ENCODE measurements at regions of chr7 and their contacts with region 1.

Region 1: DNA sequence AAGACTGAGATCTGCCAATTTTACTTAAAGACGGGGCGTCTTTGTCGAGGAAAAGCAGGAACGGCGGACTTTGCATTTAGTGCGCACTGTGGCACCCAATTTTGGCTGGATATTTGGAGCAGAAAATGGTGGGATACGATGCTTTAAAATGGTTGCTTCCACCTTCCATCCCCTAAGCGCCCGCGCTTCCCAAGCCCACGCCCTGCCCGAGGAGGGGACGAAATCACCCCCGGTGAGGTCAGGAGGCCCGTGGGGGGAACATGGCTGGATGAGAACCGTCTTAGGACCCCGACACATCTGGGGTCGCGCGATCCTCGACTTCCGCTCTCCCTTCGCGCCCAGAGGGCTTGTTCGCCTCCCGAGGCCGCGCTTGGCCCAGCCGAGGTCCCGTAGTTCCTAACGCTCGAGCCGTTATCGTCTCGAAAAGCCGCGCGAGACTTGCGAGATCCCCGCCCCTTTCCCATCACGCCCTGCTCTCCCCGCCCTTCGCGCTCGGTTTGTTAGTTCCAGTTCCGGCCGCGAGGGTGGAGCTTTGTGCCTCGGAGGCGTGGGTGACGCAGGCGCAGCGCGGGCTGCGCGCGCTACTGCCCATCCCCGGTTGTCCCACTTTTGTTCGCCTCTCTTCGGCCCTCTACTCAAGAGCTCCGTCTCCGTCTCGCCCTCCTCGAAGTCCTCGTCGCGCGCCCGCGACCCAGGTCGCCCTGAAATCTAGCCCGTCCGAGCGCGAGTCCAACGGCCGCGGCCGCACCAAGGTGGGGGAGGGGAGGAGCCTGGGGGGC is at the start of gene SRRT:
- DNase-seq: peak; percentile 97 to 99 (median 98)
- ATAC-seq: peak; percentile 97
- H3K4me3 ChIP-seq: peak within 1 kb of the TSS; percentile 75 to 94
- H3K4me3 Mint-ChIP-seq: peak within 1 kb of the TSS; percentile 98
- H3K27ac ChIP-seq: peak within 1 kb of the TSS; percentile 93 to 96
- H3K27ac Mint-ChIP-seq: peak within 1 kb of the TSS; percentile 99
- H3K4me1 ChIP-seq: peaks cover 41% of the 10 kb centered on the region
- H3K4me1 Mint-ChIP-seq: peaks cover 43% of the 10 kb centered on the region
- H3K27me3 ChIP-seq: no peaks in the 10 kb centered on the region
- H3K27me3 Mint-ChIP-seq: no peaks in the 10 kb centered on the region
- CTCF ChIP-seq: no peak
- total RNA-seq, gene SRRT: 491 to 496 TPM

Region 2: GRCh38 chr7:100837099-100837836 is 37.5 kb before region 1 on chr7:
- CTCF ChIA-PET with region 1: no interaction called
- POLR2A ChIA-PET with region 1: no interaction called
- intact Hi-C with region 1: loop called in 1 of 2 experiments (anchors 1 kb)
- DNase-seq: peak; percentile 54 to 88 (median 78)
- ATAC-seq: peak; percentile 95
- H3K4me3 ChIP-seq: peak overlapping the region; percentile 50 to 64
- H3K4me3 Mint-ChIP-seq: peak overlapping the region; percentile 82
- H3K27ac ChIP-seq: peak overlapping the region; percentile 22 to 30
- H3K27ac Mint-ChIP-seq: peak overlapping the region; percentile 74
- H3K4me1 ChIP-seq: peaks cover 4% of the 10 kb centered on the region
- H3K4me1 Mint-ChIP-seq: peaks cover 8% of the 10 kb centered on the region
- H3K27me3 ChIP-seq: no peaks in the 10 kb centered on the region
- H3K27me3 Mint-ChIP-seq: no peaks in the 10 kb centered on the region
- CTCF ChIP-seq: no peak

Region 3: DNA sequence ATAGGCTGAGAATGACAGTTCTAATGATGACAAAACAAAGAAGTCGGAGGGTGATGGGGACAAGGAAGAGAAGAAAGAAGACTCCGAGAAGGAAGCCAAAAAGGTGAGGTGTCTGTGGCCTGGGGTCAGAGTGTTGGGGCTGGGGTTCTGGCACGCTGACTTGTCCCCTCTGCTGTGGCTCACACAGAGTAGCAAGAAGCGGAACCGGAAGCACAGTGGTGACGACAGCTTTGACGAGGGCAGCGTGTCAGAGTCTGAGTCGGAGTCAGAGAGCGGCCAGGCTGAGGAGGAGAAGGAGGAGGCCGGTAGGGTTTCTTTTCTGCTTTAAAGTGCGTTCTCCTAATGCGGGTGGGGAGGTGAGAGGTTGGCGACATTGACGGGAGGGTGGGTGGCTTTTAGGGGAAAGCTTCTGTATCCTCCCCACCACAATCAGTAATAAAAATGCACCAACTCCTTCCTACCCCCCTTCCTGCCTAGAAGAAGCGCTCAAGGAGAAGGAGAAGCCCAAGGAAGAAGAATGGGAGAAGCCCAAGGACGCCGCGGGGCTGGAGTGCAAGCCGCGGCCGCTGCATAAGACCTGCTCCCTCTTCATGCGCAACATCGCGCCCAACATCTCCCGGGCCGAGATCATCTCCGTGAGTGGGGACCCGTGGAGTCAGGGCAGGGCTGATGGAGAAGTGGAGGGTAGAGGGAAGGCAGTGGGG is 10.1 kb after region 1 on chr7:
- CTCF ChIA-PET with region 1: interaction called, 27 read pairs
- POLR2A ChIA-PET with region 1: interaction called, 106 read pairs
- intact Hi-C with region 1: loop called (anchors 1 kb)
- DNase-seq: peak in 5 of 9 experiments; percentile 26 to 91 (median 82)
- ATAC-seq: peak; percentile 37
- H3K4me3 ChIP-seq: peak overlapping the region in 1 of 2 experiments; percentile 18
- H3K4me3 Mint-ChIP-seq: peak overlapping the region; percentile 67
- H3K27ac ChIP-seq: peak overlapping the region in 1 of 2 experiments; percentile 87
- H3K27ac Mint-ChIP-seq: peak overlapping the region; percentile 87
- H3K4me1 ChIP-seq: peaks cover 27% of the 10 kb centered on the region
- H3K4me1 Mint-ChIP-seq: peaks cover 46% of the 10 kb centered on the region
- H3K27me3 ChIP-seq: no peaks in the 10 kb centered on the region
- H3K27me3 Mint-ChIP-seq: no peaks in the 10 kb centered on the region
- CTCF ChIP-seq: no peak

Region 4: DNA sequence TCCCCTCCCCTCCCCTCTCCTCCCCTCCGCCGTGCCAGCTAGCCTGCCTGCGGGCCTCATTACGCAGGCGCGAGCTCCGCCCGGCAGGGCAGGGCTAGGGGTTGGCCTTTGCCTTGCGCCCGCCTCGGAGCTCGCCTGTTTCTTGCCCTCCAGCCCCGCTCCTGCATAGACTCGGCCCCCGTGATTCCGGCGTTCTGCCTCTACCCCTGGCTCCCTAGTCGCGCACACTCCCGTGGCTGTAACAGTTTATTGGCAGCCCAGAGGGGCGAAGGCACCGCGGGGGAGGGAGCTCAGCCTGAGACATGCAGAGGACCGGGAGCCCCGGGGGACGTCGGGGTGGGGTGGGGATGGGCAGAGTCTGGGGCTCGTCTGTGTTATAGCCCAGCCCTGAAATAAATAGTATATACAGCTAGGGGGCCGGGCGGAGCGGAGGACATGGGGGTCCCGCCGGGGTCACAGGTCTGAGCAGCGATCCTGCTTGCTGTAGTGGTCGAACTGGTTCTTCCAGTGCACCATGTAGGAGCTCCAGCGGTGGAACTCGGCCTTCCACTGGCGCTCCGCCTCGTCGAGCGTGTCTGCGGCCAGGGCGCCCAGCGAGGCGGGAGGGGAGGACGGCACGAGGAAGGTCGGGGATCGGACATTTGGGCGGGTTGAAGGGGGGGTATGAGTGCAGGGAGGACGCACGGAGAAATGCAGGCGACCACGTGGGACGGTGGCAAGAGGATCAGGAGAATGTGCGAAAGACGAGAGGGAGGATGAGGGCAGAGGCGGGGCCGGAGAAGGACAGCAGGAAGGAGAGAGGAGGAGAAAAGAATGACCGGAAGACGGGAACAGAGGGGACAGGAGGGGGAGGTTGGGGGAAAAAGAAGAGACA is 15.2 kb after region 1 on chr7:
- CTCF ChIA-PET with region 1: interaction called, 27 read pairs
- POLR2A ChIA-PET with region 1: interaction called, 106 read pairs
- intact Hi-C with region 1: loop called (anchors 1 kb)
- DNase-seq: peak; percentile 79 to 97 (median 91)
- ATAC-seq: peak; percentile 82
- H3K4me3 ChIP-seq: peak overlapping the region; percentile 65 to 90
- H3K4me3 Mint-ChIP-seq: peak overlapping the region; percentile 87
- H3K27ac ChIP-seq: peak overlapping the region; percentile 22 to 44
- H3K27ac Mint-ChIP-seq: peak overlapping the region; percentile 72
- H3K4me1 ChIP-seq: peaks cover 40% of the 10 kb centered on the region
- H3K4me1 Mint-ChIP-seq: peaks cover 42% of the 10 kb centered on the region
- H3K27me3 ChIP-seq: peaks cover 0 to 20% of the 10 kb centered on the region in 2 experiments
- H3K27me3 Mint-ChIP-seq: peaks cover 13% of the 10 kb centered on the region
- CTCF ChIP-seq: no peak

Region 5: GRCh38 chr7:101085162-101085987 is 210.6 kb after region 1 on chr7 and contains the start of gene TRIM56:
- CTCF ChIA-PET with region 1: interaction called, 3 read pairs
- POLR2A ChIA-PET with region 1: interaction called, 5 read pairs
- intact Hi-C with region 1: loop called in 1 of 2 experiments (anchors 1 kb)
- DNase-seq: peak; percentile 43 to 89 (median 76)
- ATAC-seq: peak; percentile 91
- H3K4me3 ChIP-seq: peak within 1 kb of the TSS; percentile 81 to 95
- H3K4me3 Mint-ChIP-seq: peak within 1 kb of the TSS; percentile 98
- H3K27ac ChIP-seq: peak within 1 kb of the TSS; percentile 91 to 94
- H3K27ac Mint-ChIP-seq: peak within 1 kb of the TSS; percentile 98
- H3K4me1 ChIP-seq: peaks cover 30% of the 10 kb centered on the region
- H3K4me1 Mint-ChIP-seq: peaks cover 27% of the 10 kb centered on the region
- H3K27me3 ChIP-seq: no peaks in the 10 kb centered on the region
- H3K27me3 Mint-ChIP-seq: no peaks in the 10 kb centered on the region
- CTCF ChIP-seq: no peak
- total RNA-seq, gene TRIM56: 24.0 to 26.0 TPM

Region 6: DNA sequence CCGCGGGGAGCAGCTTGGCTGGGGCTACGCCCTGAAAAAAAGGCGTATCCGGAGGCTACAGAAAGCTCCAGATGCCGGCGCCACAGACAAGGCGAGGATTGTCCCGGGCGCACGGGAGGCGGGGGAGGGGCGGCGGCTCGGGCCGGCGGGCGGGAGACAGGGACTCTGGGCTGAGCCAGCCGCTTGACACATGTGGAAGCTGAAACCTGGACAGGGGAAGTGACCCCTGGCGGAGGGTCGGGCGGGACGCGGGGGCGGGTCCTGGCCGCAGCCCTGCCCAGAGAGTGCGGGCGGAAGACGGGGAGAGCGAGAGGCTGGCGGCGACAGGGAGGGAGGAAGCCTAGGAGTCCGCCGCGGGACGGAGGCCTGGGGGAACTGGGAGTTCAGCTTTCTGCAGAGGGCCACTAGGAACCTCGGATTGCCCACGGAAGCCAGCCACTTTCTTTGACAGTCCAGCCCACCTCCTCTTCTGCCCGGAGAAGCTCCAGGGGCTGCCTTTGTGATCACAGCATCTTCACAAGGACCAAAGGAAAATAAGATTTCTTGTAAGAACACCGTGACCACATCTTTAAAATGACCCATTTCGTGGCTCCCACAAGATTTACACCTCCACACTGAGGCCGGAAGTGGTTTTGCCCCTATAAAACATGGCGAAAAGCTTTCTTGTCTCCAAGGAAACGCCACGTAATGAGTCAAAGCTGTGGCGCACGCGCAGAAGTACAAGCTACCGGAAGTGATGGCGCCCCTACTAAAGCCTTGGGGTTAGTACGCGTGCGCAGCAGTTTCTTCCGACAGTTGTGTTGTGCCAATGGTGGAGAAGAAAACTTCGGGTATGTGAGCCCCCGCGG is 342.8 kb after region 1 on chr7 and contains the starts of genes PLOD3 and ZNHIT1:
- CTCF ChIA-PET with region 1: no interaction called
- POLR2A ChIA-PET with region 1: no interaction called
- intact Hi-C with region 1: loop called in 1 of 2 experiments (anchors 5 kb)
- DNase-seq: peak; percentile 89 to 99 (median 96)
- ATAC-seq: peak; percentile 75
- H3K4me3 ChIP-seq: peak within 1 kb of the TSS; percentile 82 to 91
- H3K4me3 Mint-ChIP-seq: peak within 1 kb of the TSS; percentile 94
- H3K27ac ChIP-seq: peak within 1 kb of the TSS; percentile 71 to 84
- H3K27ac Mint-ChIP-seq: peak within 1 kb of the TSS; percentile 91
- H3K4me1 ChIP-seq: peaks cover 29% of the 10 kb centered on the region
- H3K4me1 Mint-ChIP-seq: peaks cover 33% of the 10 kb centered on the region
- H3K27me3 ChIP-seq: no peaks in the 10 kb centered on the region
- H3K27me3 Mint-ChIP-seq: no peaks in the 10 kb centered on the region
- CTCF ChIP-seq: no peak
- total RNA-seq, gene PLOD3: 6.6 to 7.5 TPM
- total RNA-seq, gene ZNHIT1: 23.7 to 24.6 TPM

Region 7: GRCh38 chr7:101251871-101252659 is 377.3 kb after region 1 on chr7:
- CTCF ChIA-PET with region 1: no interaction called
- POLR2A ChIA-PET with region 1: no interaction called
- intact Hi-C with region 1: loop called in 1 of 2 experiments (anchors 1 kb)
- DNase-seq: peak; percentile 97 to 100 (median 99)
- ATAC-seq: peak; percentile 98
- H3K4me3 ChIP-seq: peak overlapping the region; percentile 91 to 97
- H3K4me3 Mint-ChIP-seq: peak overlapping the region; percentile 96
- H3K27ac ChIP-seq: peak overlapping the region; percentile 80 to 86
- H3K27ac Mint-ChIP-seq: peak overlapping the region; percentile 96
- H3K4me1 ChIP-seq: peaks cover 17% of the 10 kb centered on the region
- H3K4me1 Mint-ChIP-seq: peaks cover 32% of the 10 kb centered on the region
- H3K27me3 ChIP-seq: no peaks in the 10 kb centered on the region
- H3K27me3 Mint-ChIP-seq: peaks cover 3% of the 10 kb centered on the region
- CTCF ChIP-seq: no peak